Ascending aorta (tissue), 2 donors: ENCODE measurements at regions of chr17 and their contacts with region 1.

Region 1: DNA sequence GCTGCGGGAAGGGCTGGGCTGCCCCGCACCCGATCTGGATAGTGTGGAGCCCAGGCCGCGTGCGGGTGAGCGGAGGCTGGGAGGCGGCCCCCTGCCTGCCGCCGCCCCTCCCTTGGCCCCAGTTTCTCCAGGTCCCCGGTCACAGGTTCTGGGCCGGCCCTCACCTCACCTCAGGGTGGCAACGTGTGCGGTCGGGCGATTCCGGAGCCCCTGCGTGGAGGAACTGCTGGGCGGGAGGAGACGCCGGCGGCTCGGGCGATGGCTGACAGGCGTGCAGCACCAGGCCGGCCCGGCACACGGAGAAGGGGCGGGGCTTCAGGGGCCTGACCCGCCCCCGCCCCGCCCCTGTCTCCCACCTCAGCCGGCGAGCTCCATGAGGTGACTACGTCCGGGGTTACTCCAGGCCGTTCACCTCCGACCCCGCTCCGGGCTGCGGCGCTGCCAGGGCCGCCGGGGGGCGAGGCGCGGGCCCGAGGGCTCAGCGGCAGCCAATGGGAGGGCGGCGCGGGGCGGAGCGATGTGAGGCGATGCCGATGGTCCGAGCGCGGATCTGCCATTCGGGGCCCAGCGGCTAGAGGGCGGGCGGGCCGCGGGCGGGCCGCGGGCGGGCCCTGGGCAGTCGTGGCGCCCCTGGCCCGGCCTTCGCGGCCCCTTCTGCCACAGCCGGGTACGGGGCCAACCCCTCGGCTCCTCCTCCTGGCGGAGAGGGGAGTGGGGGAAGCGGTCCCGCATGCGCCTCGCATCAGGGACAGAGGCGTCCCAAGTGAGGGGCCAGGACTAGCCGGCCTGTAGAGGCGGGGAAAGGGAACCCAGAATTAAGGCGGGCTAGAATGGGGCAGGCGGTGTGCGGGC is 16.7 kb upstream of the C17orf78 start:
- DNase-seq: peak; percentile 87 to 98
- H3K4me3 ChIP-seq: peak overlapping the region; percentile 77
- H3K27ac ChIP-seq: peak overlapping the region; percentile 79 to 83
- H3K4me1 ChIP-seq: peaks cover 5 to 6% of the 10 kb centered on the region in 2 donors
- H3K27me3 ChIP-seq: no peaks in the 10 kb centered on the region
- CTCF ChIP-seq: peak; percentile 19 to 42 (median 20)

Region 2: GRCh38 chr17:36545465-36546417 is 813.3 kb before region 1 on chr17:
- intact Hi-C with region 1: loop called (anchors 5 kb)
- DNase-seq: peak; percentile 94 to 98
- H3K4me3 ChIP-seq: peak overlapping the region; percentile 95 to 98
- H3K27ac ChIP-seq: peak overlapping the region; percentile 99 to 100
- H3K4me1 ChIP-seq: peaks cover 16 to 35% of the 10 kb centered on the region in 2 donors
- H3K27me3 ChIP-seq: no peaks in the 10 kb centered on the region
- CTCF ChIP-seq: no peak

Region 3: DNA sequence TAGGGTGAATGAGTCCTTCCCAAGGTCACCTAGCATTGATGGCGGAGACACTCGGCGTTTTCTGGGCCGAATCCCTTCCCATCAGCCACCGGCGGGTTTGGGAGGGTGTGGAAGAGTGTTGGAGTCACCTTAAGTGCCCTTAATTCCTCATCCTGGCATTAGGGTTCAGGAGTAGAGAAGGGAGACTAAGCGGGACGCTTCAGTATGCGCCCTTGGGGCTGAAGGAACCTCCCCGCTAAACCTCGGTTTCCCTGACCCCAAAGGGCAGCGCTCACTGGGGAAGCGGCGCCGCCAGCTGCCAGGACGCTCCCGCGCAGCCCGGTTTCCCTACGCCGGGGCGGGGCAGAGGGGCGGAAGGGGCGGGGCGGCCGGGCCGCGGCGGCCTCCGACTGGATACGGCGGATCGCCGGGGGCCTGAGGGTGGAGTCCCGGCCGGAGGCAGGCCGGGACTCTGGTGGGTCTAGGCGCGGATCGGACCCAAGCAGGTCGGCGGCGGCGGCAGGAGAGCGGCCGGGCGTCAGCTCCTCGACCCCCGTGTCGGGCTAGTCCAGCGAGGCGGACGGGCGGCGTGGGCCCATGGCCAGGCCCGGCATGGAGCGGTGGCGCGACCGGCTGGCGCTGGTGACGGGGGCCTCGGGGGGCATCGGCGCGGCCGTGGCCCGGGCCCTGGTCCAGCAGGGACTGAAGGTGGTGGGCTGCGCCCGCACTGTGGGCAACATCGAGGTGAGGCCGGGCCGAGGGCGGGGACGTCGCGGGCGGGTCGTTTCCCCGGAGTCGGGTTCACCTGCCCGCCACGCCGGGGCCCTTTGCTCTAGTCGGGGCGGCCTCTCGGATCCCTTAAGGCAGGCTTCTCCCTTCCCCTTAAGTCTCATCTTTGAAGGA is 767.4 kb before region 1 on chr17 and contains the start of gene DHRS11:
- intact Hi-C with region 1: loop called (anchors 10 kb)
- DNase-seq: peak in 1 of 2 donors; percentile 89
- H3K4me3 ChIP-seq: peak within 1 kb of the TSS; percentile 74 to 95
- H3K27ac ChIP-seq: peak within 1 kb of the TSS; percentile 11 to 29
- H3K4me1 ChIP-seq: peaks cover 0 to 7% of the 10 kb centered on the region in 2 donors
- H3K27me3 ChIP-seq: no peaks in the 10 kb centered on the region
- CTCF ChIP-seq: no peak
- total RNA-seq, gene DHRS11: 11.8 TPM

Region 4: GRCh38 chr17:37384560-37385149 is 25.6 kb after region 1 on chr17:
- intact Hi-C with region 1: no loop called
- DNase-seq: no peak
- H3K4me3 ChIP-seq: no peak overlapping the region
- H3K27ac ChIP-seq: no peak overlapping the region
- H3K4me1 ChIP-seq: no peaks in the 10 kb centered on the region
- H3K27me3 ChIP-seq: no peaks in the 10 kb centered on the region
- CTCF ChIP-seq: no peak

Region 5: DNA sequence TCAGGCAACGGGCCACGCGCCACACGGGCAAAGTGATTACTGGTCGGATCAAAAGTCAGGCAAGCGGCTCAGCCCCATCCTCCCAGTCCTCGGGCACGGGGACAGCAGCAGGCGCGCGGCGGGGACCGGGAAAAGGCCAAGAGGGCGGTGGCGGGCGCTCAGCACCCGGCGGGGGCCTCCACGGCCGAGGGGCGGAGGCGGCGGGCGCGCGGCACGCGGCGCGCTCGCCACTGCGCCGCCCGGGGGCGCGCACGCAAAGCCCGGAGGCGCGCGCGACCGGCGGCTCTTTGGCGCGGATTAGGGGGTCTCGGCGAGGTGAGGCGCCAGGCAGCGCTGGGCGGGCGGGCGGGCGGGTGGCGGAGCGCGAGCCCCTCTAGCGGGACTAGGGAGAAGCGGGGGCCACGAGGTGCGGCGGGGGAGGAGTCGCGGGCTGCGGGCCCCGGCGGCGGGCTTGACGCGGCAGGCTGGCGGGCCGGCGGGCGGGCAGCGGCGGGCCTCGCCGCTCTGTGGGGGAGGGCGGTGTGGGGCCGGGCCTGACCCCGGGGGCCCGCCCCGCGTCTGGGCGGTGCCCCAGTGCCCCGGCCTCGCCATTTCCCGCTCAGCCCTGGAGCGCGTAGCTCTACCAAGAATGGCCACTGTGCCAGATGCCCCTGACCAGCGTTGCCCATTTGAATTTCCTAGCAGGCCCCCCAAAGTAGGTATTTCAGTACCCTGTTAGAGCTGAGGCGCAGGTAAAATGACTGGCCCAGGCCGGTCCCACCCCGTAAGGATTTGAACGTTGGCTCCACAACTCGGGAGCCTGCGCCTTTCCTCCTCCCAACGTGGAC is 47.8 kb after region 1 on chr17 and contains the starts of genes ACACA and TADA2A:
- intact Hi-C with region 1: loop called (anchors 1 kb)
- DNase-seq: peak; percentile 22 to 88
- H3K4me3 ChIP-seq: peak within 1 kb of the TSS; percentile 72 to 95
- H3K27ac ChIP-seq: peak within 1 kb of the TSS; percentile 90 to 94
- H3K4me1 ChIP-seq: peaks cover 0 to 16% of the 10 kb centered on the region in 2 donors
- H3K27me3 ChIP-seq: no peaks in the 10 kb centered on the region
- CTCF ChIP-seq: peak in 1 of 3 experiments; percentile 22
- total RNA-seq, gene ACACA: 69.0 TPM
- total RNA-seq, gene TADA2A: 7.7 TPM

Region 6: GRCh38 chr17:37417852-37418251 is 58.8 kb after region 1 on chr17:
- intact Hi-C with region 1: no loop called
- DNase-seq: no peak
- H3K4me3 ChIP-seq: no peak overlapping the region
- H3K27ac ChIP-seq: no peak overlapping the region
- H3K4me1 ChIP-seq: no peaks in the 10 kb centered on the region
- H3K27me3 ChIP-seq: no peaks in the 10 kb centered on the region
- CTCF ChIP-seq: no peak

Region 7: GRCh38 chr17:37489197-37490001 is 130.3 kb after region 1 on chr17 and contains the start of gene DUSP14:
- intact Hi-C with region 1: loop called (anchors 2 kb)
- DNase-seq: peak; percentile 12 to 84
- H3K4me3 ChIP-seq: peak within 1 kb of the TSS; percentile 96 to 99
- H3K27ac ChIP-seq: peak within 1 kb of the TSS; percentile 75 to 90
- H3K4me1 ChIP-seq: peaks cover 3 to 20% of the 10 kb centered on the region in 2 donors
- H3K27me3 ChIP-seq: no peaks in the 10 kb centered on the region
- CTCF ChIP-seq: no peak
- total RNA-seq, gene DUSP14: 4.6 TPM

Region 8: DNA sequence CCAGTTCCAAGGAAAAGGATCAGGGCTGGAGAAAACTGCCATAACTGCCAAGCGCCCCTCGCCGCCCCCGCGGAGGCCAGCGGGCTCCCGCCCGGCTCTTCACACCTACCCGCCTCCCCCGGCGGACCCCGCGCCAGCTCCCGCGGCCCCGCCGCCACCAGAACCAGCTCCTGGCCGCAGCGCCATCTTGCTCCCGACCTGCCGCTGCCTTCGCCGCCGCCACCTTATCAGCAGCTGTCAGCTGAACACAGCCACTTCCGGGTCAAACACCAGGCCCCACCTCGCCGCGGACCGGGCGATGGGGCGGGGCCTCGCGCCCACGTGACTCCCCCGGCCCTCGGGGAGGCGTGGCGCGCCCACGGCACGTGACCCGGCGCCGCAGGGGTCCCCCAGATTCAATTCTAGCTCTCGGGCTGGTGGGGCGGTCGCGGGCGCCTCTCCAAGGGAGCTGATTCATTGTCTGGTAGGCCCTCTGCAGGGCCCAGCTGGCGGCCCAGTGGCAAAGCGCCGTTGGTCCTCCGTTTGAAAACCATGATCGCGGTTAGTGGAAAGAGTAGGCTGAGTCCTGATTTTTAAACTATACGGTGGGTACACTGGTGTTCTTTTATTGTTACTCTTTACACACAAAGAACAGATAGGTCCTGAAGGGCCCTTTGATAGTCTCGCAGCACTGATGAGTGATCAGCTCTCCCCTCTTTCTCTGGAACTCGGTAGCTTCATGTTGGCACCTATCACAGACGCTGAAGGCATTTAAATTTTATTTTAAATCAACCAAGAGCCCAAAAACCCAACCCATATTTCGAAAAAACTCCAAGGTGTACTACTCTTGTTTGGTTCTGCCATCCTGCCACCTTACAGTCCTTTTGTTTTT is 250.3 kb after region 1 on chr17 and contains the start of gene SYNRG:
- intact Hi-C with region 1: loop called (anchors 1 kb)
- DNase-seq: peak; percentile 89 to 99
- H3K4me3 ChIP-seq: peak within 1 kb of the TSS; percentile 69 to 96
- H3K27ac ChIP-seq: peak within 1 kb of the TSS; percentile 82 to 89
- H3K4me1 ChIP-seq: peaks cover 0 to 9% of the 10 kb centered on the region in 2 donors
- H3K27me3 ChIP-seq: no peaks in the 10 kb centered on the region
- CTCF ChIP-seq: peak; percentile 32 to 36 (median 35)
- total RNA-seq, gene SYNRG: 47.1 TPM

Region 9: GRCh38 chr17:37698132-37698615 is 339.1 kb after region 1 on chr17:
- intact Hi-C with region 1: no loop called
- DNase-seq: no peak
- H3K4me3 ChIP-seq: no peak overlapping the region
- H3K27ac ChIP-seq: no peak overlapping the region
- H3K4me1 ChIP-seq: no peaks in the 10 kb centered on the region
- H3K27me3 ChIP-seq: no peaks in the 10 kb centered on the region
- CTCF ChIP-seq: no peak